MCF 10A (cell line): ENCODE measurements at regions of chr6 and their contacts with region 1.

Region 1: DNA sequence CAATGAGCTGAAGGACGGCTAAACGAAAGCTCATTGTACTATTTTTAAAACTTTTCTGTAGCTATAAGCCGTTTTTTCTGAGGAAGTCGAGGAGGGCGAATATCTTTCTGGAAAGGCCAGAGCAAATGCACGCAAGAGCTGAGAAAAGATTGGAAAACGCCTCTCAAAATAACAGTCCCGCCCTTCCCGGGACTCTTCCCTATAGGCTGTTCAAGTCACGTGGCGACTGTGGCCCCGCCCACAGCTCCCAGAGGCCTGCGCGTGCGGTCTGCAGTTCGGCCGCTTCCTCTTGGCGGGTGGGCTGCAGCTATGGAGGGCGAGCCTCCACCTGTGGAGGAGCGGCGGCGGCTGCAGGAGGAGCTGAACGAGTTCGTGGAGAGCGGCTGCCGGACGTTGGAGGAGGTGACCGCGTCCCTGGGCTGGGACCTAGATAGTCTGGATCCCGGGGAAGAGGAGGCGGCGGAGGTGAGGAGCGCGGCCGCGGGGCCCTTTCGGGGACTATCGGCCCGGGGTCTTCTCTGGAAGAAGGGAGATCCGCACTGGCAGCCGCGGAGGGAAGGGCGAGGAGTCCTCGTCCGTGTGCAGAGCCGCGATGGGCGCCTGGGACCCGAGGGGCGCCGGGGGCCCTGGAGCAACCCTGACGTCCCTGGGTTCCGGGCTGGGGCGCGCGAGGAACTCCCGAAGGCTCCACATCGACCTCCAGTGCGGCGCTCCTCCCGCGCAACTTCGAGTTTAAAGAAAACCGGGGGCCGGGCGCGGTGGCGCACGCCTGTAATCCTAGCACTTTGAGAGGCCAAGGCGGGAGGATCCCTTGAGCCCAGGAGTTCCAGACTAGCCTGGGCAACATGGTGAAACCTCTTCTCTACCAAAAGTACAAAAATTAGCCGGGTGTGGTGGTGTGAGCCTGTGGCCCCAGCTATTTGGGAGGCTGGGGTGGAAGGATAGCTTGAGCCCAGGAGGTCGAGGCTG is at the start of gene SNRNP48:
- DNase-seq: peak; percentile 94
- H3K4me3 Mint-ChIP-seq: peak within 1 kb of the TSS; percentile 90
- H3K27ac Mint-ChIP-seq: peak within 1 kb of the TSS; percentile 87
- H3K4me1 Mint-ChIP-seq: peaks cover 34% of the 10 kb centered on the region
- H3K27me3 Mint-ChIP-seq: no peaks in the 10 kb centered on the region
- CTCF ChIP-seq: no peak
- total RNA-seq, gene SNRNP48: 10.2 and 11.2 TPM in 2 replicates

Region 2: DNA sequence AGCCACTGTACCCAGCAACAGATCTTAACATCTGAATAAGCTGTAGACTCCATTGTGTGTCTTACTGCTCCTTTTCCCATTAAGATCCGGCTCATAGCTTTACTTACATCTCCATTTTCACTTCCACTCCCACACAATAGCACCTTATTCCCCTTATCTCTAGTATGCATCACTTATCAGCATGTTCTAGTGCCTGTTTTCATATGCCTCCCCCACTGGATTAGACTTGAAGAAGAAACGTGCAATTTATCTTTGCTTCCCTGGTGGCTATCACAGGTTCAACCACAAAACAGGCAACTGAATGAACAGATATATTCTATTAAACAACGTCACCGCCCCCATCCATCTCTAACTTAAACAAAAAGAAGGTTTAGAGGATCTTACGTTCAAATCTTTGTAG is 289.3 kb before region 1 on chr6:
- CTCF ChIA-PET with region 1: no interaction called
- POLR2A ChIA-PET with region 1: no interaction called
- intact Hi-C with region 1: loop called (anchors 5 kb)
- DNase-seq: no peak
- H3K4me3 Mint-ChIP-seq: no peak overlapping the region
- H3K27ac Mint-ChIP-seq: peak overlapping the region; percentile 29
- H3K4me1 Mint-ChIP-seq: peaks cover 11% of the 10 kb centered on the region
- H3K27me3 Mint-ChIP-seq: no peaks in the 10 kb centered on the region
- CTCF ChIP-seq: no peak

Region 3: GRCh38 chr6:7424967-7425807 is 165.0 kb before region 1 on chr6:
- CTCF ChIA-PET with region 1: interaction called, 4 read pairs
- POLR2A ChIA-PET with region 1: interaction called, 7 read pairs
- intact Hi-C with region 1: loop called (anchors 1 kb)
- DNase-seq: peak; percentile 80
- H3K4me3 Mint-ChIP-seq: no peak overlapping the region
- H3K27ac Mint-ChIP-seq: no peak overlapping the region
- H3K4me1 Mint-ChIP-seq: no peaks in the 10 kb centered on the region
- H3K27me3 Mint-ChIP-seq: no peaks in the 10 kb centered on the region
- CTCF ChIP-seq: peak; percentile 61

Region 4: GRCh38 chr6:7550433-7550801 is 39.8 kb before region 1 on chr6:
- CTCF ChIA-PET with region 1: no interaction called
- POLR2A ChIA-PET with region 1: interaction called, 6 read pairs
- intact Hi-C with region 1: loop called (anchors 5 kb)
- DNase-seq: peak; percentile 63
- H3K4me3 Mint-ChIP-seq: peak overlapping the region; percentile 31
- H3K27ac Mint-ChIP-seq: peak overlapping the region; percentile 57
- H3K4me1 Mint-ChIP-seq: peaks cover 62% of the 10 kb centered on the region
- H3K27me3 Mint-ChIP-seq: no peaks in the 10 kb centered on the region
- CTCF ChIP-seq: no peak

Region 5: GRCh38 chr6:7604506-7604905 is 14.3 kb after region 1 on chr6:
- CTCF ChIA-PET with region 1: no interaction called
- POLR2A ChIA-PET with region 1: interaction called, 19 read pairs
- intact Hi-C with region 1: no loop called
- DNase-seq: no peak
- H3K4me3 Mint-ChIP-seq: no peak overlapping the region
- H3K27ac Mint-ChIP-seq: no peak overlapping the region
- H3K4me1 Mint-ChIP-seq: no peaks in the 10 kb centered on the region
- H3K27me3 Mint-ChIP-seq: no peaks in the 10 kb centered on the region
- CTCF ChIP-seq: no peak